OCI-LY7 (cell line): ENCODE measurements at regions of chr12 and their contacts with region 1.

Region 1: DNA sequence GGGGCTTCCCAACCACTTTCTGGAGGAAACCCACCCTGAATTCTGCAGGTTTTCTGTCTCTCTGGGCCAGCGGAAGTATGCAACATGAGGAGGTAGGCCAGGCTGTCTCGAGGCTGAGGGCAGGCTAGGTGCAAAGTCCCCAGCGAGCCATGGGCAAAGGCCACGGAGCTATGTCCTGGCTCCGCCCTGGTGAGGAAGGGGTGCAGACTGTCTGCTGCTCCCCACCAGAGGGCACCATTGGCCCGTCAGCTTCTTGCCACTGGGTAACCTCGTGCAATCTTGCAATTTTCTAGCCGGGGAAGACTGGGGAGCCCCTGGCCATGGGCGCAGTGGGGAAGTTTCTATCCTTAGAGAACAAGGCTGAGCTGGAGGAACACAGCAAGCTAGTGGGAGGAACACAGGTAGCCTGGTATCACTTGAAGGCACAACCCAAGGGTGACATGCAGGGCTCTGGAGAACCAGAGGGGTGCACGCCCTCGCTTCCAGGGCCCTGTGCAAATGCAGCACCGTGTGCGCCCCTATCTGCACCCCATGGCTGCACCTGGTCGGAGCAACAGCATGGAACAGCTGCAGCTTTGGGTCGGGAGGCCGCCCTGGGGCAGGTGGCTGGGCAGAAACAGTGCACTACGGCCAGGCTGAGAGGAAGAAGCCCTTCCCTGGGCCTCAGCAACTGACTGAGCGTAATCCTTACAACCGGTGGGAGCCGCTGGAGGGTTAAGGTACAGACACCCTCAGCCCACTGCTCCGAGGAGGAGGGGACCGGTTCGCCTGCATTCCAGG is 27.6 kb upstream of the RPLP0 start:
- DNase-seq: peak; percentile 91
- H3K4me3 ChIP-seq: peak overlapping the region; percentile 43
- H3K27ac ChIP-seq: peak overlapping the region; percentile 69
- H3K4me1 ChIP-seq: peaks cover 57% of the 10 kb centered on the region
- CTCF ChIP-seq: peak; percentile 95

Region 2: DNA sequence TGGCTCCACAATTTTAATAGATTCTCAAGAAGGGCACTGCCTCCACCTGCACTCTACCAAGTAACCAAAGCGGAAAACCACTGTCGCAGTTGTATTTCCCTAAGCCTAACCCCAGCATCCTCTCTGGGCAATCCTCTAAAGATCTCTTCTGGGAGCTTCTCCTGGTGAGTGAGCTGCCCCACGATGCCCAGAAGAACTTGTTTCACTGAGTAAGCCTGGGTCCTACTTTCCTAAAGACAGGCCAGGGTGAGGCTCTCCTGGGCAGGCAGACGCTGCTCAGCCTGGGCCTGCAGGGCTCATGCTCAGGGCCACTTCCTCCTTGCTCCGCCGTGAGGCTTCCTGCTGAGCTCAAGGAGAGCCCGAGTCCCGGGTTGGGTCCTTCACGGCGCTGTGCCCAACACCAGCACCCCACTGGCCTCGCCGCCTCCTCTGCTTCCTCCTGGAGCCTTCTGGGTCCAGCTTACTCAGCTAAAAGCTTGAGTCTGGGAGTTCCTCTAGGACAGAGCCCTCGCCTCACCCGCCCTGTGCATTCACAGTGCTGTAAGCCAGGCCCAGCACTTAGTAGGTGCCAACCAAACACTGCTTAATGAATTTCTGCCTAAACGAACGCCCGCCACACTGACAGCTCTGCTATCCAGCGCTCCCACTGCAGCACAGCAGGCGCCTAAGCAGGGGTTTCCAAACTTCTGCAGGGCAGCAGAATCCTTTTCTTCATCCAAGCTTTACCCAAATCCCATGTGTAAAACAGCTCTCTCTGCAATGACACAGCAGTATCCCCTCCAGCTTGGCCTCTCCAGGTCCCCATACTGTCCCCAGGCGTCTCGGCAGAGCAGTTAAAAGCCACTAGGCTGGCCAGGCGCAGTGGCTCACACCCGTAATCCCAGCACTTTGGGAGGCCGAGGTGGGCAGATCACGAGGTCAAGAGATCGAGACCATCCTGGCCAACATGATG is 117.7 kb before region 1 on chr12:
- CTCF ChIA-PET with region 1: interaction called, 10 read pairs
- POLR2A ChIA-PET with region 1: no interaction called
- intact Hi-C with region 1: no loop called
- DNase-seq: peak; percentile 79
- H3K4me3 ChIP-seq: peak overlapping the region; percentile 45
- H3K27ac ChIP-seq: peak overlapping the region; percentile 76
- H3K4me1 ChIP-seq: peaks cover 45% of the 10 kb centered on the region
- CTCF ChIP-seq: no peak

Region 3: DNA sequence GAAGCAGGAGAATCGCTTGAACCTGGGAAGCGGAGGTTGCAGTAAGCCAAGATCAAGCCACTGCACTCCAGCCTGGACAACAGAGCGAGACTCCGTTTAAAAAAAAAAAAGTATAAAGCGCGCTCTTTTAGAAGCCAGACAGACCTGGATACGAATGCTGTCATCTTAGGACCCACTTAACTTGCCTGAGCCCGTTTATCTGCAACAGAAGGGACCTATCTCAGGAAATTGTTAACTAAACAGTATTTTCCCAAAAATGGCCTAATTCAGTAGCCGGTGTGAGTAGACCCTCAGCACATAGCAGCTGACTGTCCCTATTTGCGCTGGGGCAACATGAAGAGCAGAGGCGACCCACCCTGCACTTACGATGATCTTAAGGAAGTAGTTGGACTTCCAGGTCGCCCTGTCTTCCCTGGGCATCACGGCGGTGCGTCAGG is 28.1 kb before region 1 on chr12:
- CTCF ChIA-PET with region 1: interaction called, 4 read pairs
- POLR2A ChIA-PET with region 1: interaction called, 26 read pairs
- intact Hi-C with region 1: no loop called
- DNase-seq: peak; percentile 22
- H3K4me3 ChIP-seq: peak overlapping the region; percentile 90
- H3K27ac ChIP-seq: peak overlapping the region; percentile 87
- H3K4me1 ChIP-seq: peaks cover 48% of the 10 kb centered on the region
- CTCF ChIP-seq: no peak

Region 4: GRCh38 chr12:120265473-120266179 is 37.1 kb after region 1 on chr12 and contains the start of gene PXN:
- CTCF ChIA-PET with region 1: interaction called, 68 read pairs
- POLR2A ChIA-PET with region 1: interaction called, 24 read pairs
- intact Hi-C with region 1: loop called (anchors 1 kb)
- DNase-seq: peak; percentile 86
- H3K4me3 ChIP-seq: peak within 1 kb of the TSS; percentile 76
- H3K27ac ChIP-seq: no peak within 1 kb of the TSS
- H3K4me1 ChIP-seq: peaks cover 6% of the 10 kb centered on the region
- CTCF ChIP-seq: peak; percentile 82
- total RNA-seq, gene PXN: 5.5 and 8.6 TPM in 2 replicates

Region 5: GRCh38 chr12:120292661-120293531 is 64.4 kb after region 1 on chr12 and contains the start of gene RNU4-1:
- CTCF ChIA-PET with region 1: interaction called, 5 read pairs
- POLR2A ChIA-PET with region 1: interaction called, 75 read pairs
- intact Hi-C with region 1: loop called (anchors 1 kb)
- DNase-seq: peak; percentile 97
- H3K4me3 ChIP-seq: peak within 1 kb of the TSS; percentile 68
- H3K27ac ChIP-seq: peak within 1 kb of the TSS; percentile 89
- H3K4me1 ChIP-seq: peaks cover 32% of the 10 kb centered on the region
- CTCF ChIP-seq: no peak
- total RNA-seq, gene RNU4-1: under 0.01 TPM in 1 of 2 replicates, not detected in the other

Region 6: DNA sequence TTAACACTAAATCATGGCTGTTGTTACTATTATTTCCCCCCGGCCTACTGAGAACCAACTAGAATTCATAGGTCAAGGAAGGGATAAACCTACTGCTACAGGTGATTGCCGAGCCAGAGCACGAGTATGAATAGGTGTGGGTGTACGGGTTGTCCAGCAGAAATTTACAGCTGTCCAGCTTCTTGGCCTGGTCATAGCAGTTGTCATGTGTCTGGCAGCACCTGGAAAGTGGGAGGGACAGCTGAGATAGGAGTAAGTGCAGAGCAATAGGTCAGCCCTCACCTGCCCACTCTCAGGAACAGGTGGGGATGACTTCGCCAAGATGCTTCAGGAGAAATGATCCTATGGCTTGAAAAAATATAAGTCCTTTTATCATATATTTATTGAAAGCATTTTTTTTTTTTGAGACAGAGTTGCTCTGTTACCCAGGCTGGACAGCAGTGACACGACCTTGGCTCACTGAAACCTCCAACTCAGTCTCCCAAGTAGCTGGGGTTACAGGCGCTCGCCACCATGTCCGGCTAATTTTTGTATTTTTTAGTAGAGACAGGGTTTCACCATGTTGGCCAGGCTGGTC is 96.4 kb after region 1 on chr12:
- CTCF ChIA-PET with region 1: interaction called, 3 read pairs
- POLR2A ChIA-PET with region 1: no interaction called
- intact Hi-C with region 1: loop called (anchors 1 kb)
- DNase-seq: no peak
- H3K4me3 ChIP-seq: no peak overlapping the region
- H3K27ac ChIP-seq: no peak overlapping the region
- H3K4me1 ChIP-seq: peaks cover 4% of the 10 kb centered on the region
- CTCF ChIP-seq: no peak